Caco-2 (cell line): ENCODE measurements at regions of chr20 and their contacts with region 1.

Region 1: GRCh38 chr20:32098786-32099185 is 10.7 kb upstream of the TM9SF4 start:
- DNase-seq: peak in 1 of 2 experiments; percentile 42
- H3K4me3 ChIP-seq: no peak overlapping the region
- H3K4me3 Mint-ChIP-seq: no peak overlapping the region
- H3K27ac Mint-ChIP-seq: no peak overlapping the region
- H3K4me1 ChIP-seq: no peaks in the 10 kb centered on the region
- H3K4me1 Mint-ChIP-seq: no peaks in the 10 kb centered on the region
- H3K27me3 ChIP-seq: peaks cover 5% of the 10 kb centered on the region
- H3K27me3 Mint-ChIP-seq: peaks cover 43% of the 10 kb centered on the region
- CTCF ChIP-seq: no peak

Region 2: GRCh38 chr20:32163951-32164350 is 65.2 kb after region 1 on chr20:
- CTCF ChIA-PET with region 1: interaction called, 11 read pairs
- POLR2A ChIA-PET with region 1: no interaction called
- intact Hi-C with region 1: no loop called
- DNase-seq: no peak
- H3K4me3 ChIP-seq: no peak overlapping the region
- H3K4me3 Mint-ChIP-seq: no peak overlapping the region
- H3K27ac Mint-ChIP-seq: no peak overlapping the region
- H3K4me1 ChIP-seq: 0 out of 2 replicates have a peak, but pooled peaks cover 5% of the 10 kb centered on the region
- H3K4me1 Mint-ChIP-seq: no peaks in the 10 kb centered on the region
- H3K27me3 ChIP-seq: no peaks in the 10 kb centered on the region
- H3K27me3 Mint-ChIP-seq: no peaks in the 10 kb centered on the region
- CTCF ChIP-seq: no peak